PC-3 (cell line): ENCODE measurements at regions of chr12 and their contacts with region 1.

Region 1: DNA sequence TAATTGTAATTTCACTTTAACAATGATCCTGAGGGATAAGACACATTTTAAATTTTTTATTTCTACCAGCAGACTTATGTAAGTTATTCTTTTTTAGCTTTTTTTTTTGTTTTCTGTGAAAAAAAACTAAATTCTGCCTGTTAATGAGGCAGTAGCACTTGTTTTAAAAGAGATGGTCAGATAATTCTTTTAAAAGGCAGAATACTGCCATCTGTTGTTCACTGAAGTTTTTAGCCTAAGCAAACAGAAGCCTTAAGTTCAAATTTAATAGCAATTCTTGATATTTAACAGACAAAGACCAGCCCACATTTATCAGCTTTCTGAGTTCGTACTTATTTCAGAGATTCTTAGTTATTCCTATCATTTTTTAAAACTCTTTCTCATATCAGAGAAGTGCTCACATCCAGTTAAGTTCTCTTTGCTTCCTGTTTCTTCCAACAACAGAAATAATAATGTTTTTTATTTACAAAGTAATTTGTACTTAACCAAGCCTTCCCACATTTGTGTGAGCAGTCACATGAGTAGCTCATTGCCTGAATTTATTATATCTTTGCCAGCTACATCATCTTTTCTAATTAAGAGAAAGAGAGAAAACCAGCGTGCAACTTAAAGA is 93.4 kb upstream of the SLCO1C1 start:
- DNase-seq: peak; percentile 55
- ATAC-seq: no peak
- H3K4me3 ChIP-seq: no peak overlapping the region
- H3K27ac ChIP-seq: 0 out of 2 replicates have a peak overlapping the region, but pooled peaks have one; percentile 50
- H3K4me1 ChIP-seq: peaks cover 9% of the 10 kb centered on the region; the same call in 1 of the 2 replicates
- H3K27me3 ChIP-seq: no peaks in the 10 kb centered on the region
- CTCF ChIP-seq: peak; percentile 66

Region 2: DNA sequence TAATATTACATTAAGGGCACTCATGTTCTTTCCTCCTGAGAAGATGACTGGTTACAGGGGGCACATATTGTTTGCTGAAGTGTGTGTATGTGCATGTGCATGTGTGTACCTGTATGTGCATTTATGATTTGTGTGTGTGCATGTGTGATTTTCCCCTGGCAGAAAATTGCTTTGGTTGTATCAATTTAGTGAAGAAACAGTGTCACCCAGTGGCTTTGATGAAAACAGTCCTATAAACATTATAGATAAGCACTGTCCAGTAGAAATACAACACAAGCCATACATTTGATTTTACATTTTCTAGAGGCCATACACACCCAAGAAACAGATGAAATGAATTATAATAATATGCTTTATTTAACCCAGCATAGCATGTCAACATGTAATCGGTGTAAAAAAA is 224.8 kb before region 1 on chr12:
- CTCF ChIA-PET with region 1: no interaction called
- POLR2A ChIA-PET with region 1: no interaction called
- intact Hi-C with region 1: loop called (anchors 5 kb)
- DNase-seq: peak; percentile 46
- ATAC-seq: no peak
- H3K4me3 ChIP-seq: no peak overlapping the region
- H3K27ac ChIP-seq: no peak overlapping the region
- H3K4me1 ChIP-seq: no peaks in the 10 kb centered on the region
- H3K27me3 ChIP-seq: peaks cover 20% of the 10 kb centered on the region
- CTCF ChIP-seq: peak; percentile 56

Region 3: GRCh38 chr12:20463913-20464524 is 137.8 kb before region 1 on chr12:
- CTCF ChIA-PET with region 1: no interaction called
- POLR2A ChIA-PET with region 1: no interaction called
- intact Hi-C with region 1: loop called (anchors 1 kb)
- DNase-seq: peak; percentile 41
- ATAC-seq: no peak
- H3K4me3 ChIP-seq: no peak overlapping the region
- H3K27ac ChIP-seq: no peak overlapping the region
- H3K4me1 ChIP-seq: no peaks in the 10 kb centered on the region
- H3K27me3 ChIP-seq: no peaks in the 10 kb centered on the region
- CTCF ChIP-seq: peak; percentile 69

Region 4: GRCh38 chr12:20483776-20484175 is 118.0 kb before region 1 on chr12:
- CTCF ChIA-PET with region 1: no interaction called
- POLR2A ChIA-PET with region 1: no interaction called
- intact Hi-C with region 1: loop called (anchors 1 kb)
- DNase-seq: no peak
- ATAC-seq: no peak; the same call in 1 of the 2 replicates
- H3K4me3 ChIP-seq: no peak overlapping the region
- H3K27ac ChIP-seq: no peak overlapping the region
- H3K4me1 ChIP-seq: no peaks in the 10 kb centered on the region
- H3K27me3 ChIP-seq: no peaks in the 10 kb centered on the region
- CTCF ChIP-seq: no peak

Region 5: GRCh38 chr12:20489645-20490044 is 112.1 kb before region 1 on chr12:
- CTCF ChIA-PET with region 1: no interaction called
- POLR2A ChIA-PET with region 1: no interaction called
- intact Hi-C with region 1: loop called (anchors 1 kb)
- DNase-seq: no peak
- ATAC-seq: no peak
- H3K4me3 ChIP-seq: no peak overlapping the region
- H3K27ac ChIP-seq: no peak overlapping the region
- H3K4me1 ChIP-seq: peaks cover 3% of the 10 kb centered on the region; the same call in 1 of the 2 replicates
- H3K27me3 ChIP-seq: no peaks in the 10 kb centered on the region
- CTCF ChIP-seq: no peak